CD8-positive, alpha-beta memory T cell (primary cell): ENCODE measurements at regions of chr10 and their contacts with region 1.

Region 1: DNA sequence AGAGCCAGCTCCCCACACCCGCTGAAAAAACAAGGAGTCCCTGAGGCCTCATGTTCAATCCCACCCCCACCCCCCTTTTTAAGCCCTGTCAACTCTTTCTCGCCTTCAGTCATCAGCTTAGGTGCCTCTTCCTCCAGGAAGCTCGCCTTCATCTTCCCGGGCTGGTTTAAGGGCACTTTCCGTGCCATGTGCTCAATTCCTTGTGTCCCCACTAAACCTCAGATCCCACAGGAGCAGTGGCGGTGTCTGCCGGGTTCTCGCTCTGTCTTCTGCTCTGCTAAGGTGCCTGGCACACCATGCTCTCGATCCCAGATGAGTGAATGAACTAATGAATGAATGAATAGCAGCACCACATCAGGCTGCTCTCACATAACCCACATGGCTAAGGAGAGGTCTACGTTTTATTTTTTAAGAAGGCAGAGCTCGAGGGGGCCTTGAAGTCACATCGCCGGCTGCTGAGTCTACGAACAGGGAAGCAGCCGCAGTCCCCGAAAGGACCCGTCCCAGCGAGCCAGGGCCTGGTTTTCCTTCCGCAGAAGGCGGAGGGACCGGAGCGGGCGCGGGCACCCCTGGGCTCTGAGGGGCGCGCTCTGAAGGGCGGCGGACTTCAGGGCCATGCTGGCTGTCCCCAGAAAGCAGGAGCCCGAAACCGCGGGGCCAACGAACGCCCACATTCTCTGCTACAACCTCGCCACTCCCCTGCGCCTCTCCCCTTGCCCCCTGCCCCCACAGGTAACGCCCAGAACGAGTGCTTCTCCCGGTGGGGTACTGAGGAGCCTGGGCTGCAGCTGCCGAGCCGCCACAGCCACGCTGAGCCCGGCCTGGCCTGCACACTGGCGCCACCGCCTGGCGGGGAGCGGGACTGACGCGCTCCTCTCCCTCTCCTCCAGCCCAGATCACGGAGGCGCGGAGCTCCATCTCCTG is 73.4 kb upstream of the KCNMA1 start:
- DNase-seq: peak; percentile 47 to 74 (median 61)
- H3K4me3 ChIP-seq: no peak overlapping the region
- H3K4me3 Mint-ChIP-seq: peak overlapping the region; percentile 14 to 79 (median 62)
- H3K27ac ChIP-seq: no peak overlapping the region
- H3K27ac Mint-ChIP-seq: peak overlapping the region in 1 of 8 donors; percentile 53
- H3K4me1 ChIP-seq: peaks cover 4% of the 10 kb centered on the region
- H3K4me1 Mint-ChIP-seq: peaks cover 8 to 12% (median 11%) of the 10 kb centered on the region in 3 donors
- H3K27me3 ChIP-seq: no peaks in the 10 kb centered on the region
- H3K27me3 Mint-ChIP-seq: peaks cover 12 to 27% of the 10 kb centered on the region in 2 donors

Region 2: GRCh38 chr10:77173615-77174461 is 537.2 kb before region 1 on chr10:
- CTCF ChIA-PET with region 1: interaction called, 14 read pairs
- POLR2A ChIA-PET with region 1: no interaction called
- DNase-seq: peak; percentile 36 to 73 (median 54)
- H3K4me3 ChIP-seq: no peak overlapping the region
- H3K4me3 Mint-ChIP-seq: no peak overlapping the region
- H3K27ac ChIP-seq: no peak overlapping the region
- H3K27ac Mint-ChIP-seq: peak overlapping the region in 1 of 8 donors; percentile 35
- H3K4me1 ChIP-seq: no peaks in the 10 kb centered on the region
- H3K4me1 Mint-ChIP-seq: no peaks in the 10 kb centered on the region
- H3K27me3 ChIP-seq: no peaks in the 10 kb centered on the region
- H3K27me3 Mint-ChIP-seq: peaks cover 5 to 14% of the 10 kb centered on the region in 2 donors

Region 3: DNA sequence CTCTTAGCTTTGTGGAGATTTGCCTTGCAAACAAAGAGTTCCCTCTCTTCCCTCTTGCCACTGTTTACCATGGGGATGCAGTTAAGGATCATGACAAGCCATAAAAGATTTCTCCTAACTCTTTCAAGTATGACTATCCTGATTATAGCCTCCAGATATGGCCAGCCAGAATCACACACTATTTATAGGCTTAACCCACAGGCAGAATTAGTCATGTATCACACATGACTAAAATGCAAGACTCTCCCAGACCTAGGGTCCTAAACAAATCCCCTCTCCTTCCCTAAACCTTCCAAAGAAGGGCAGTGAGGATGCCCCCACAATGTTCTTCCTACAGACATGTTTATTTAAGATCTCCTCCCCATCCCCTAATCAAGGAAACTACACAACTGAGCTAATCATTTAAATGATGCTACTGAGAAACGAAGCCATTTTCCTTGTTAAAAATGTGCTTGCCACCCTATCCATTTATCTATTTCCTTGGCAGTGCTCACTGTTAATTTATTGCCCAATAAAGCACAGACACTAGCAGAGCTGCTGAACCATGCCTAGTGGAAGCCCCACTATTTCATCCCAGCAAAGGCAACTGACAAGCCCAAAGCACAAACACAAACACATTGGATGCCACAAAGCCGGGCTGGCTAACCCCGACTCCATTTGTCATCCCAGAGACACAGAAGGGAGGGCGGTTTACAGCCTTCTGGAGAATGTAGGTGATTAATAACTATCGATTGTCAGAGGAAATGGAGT is 436.8 kb before region 1 on chr10:
- CTCF ChIA-PET with region 1: no interaction called
- POLR2A ChIA-PET with region 1: no interaction called
- DNase-seq: no peak
- H3K4me3 ChIP-seq: no peak overlapping the region
- H3K4me3 Mint-ChIP-seq: peak overlapping the region in 1 of 7 donors; percentile 25
- H3K27ac ChIP-seq: no peak overlapping the region
- H3K27ac Mint-ChIP-seq: peak overlapping the region in 1 of 8 donors; percentile 32
- H3K4me1 ChIP-seq: no peaks in the 10 kb centered on the region
- H3K4me1 Mint-ChIP-seq: peaks cover 20 to 27% (median 23%) of the 10 kb centered on the region in 3 donors
- H3K27me3 ChIP-seq: no peaks in the 10 kb centered on the region
- H3K27me3 Mint-ChIP-seq: peaks cover 0 to 3% of the 10 kb centered on the region in 2 donors

Region 4: GRCh38 chr10:77837240-77837924 is 126.4 kb after region 1 on chr10:
- CTCF ChIA-PET with region 1: interaction called, 20 read pairs
- POLR2A ChIA-PET with region 1: no interaction called
- DNase-seq: peak; percentile 37 to 76 (median 54)
- H3K4me3 ChIP-seq: no peak overlapping the region
- H3K4me3 Mint-ChIP-seq: peak overlapping the region in 6 of 7 donors; percentile 15 to 82 (median 42)
- H3K27ac ChIP-seq: no peak overlapping the region
- H3K27ac Mint-ChIP-seq: peak overlapping the region in 7 of 8 donors; percentile 77 to 99 (median 92)
- H3K4me1 ChIP-seq: peaks cover 21% of the 10 kb centered on the region
- H3K4me1 Mint-ChIP-seq: peaks cover 22 to 30% (median 30%) of the 10 kb centered on the region in 3 donors
- H3K27me3 ChIP-seq: no peaks in the 10 kb centered on the region
- H3K27me3 Mint-ChIP-seq: no peaks in the 10 kb centered on the region

Region 5: DNA sequence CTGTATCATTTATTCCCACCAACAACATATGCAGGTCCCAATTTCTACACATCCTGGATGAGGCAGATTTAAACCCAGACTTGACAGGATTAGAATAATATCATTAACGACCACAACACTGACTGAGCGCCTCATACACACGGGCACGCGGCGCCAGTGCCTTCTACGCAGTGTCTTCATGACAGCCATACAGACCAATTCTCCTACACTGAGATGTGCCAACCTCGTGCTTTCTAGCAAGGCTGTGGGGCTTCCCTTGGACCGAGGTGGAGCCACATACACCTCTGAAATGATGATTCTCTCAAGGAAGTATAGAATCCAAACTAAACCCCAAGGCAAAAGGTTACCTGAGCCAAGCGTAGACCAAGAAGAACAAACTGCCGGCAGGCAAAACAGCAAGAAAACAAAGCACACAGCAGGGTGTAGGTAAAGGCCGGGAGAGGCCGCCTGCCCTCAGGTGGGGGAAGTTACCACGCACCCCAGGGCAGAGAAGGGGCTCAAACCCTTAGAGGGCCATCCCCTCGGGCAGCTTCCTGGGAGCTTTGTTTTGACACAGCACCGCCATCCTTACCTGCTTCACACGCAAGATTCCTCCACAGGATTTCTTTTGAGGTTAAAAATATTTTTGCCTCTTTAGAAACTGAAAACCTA is 139.7 kb after region 1 on chr10:
- CTCF ChIA-PET with region 1: no interaction called
- POLR2A ChIA-PET with region 1: no interaction called
- DNase-seq: no peak
- H3K4me3 ChIP-seq: no peak overlapping the region
- H3K4me3 Mint-ChIP-seq: no peak overlapping the region
- H3K27ac ChIP-seq: no peak overlapping the region
- H3K27ac Mint-ChIP-seq: peak overlapping the region in 2 of 8 donors; percentile 21 to 70
- H3K4me1 ChIP-seq: peaks cover 3% of the 10 kb centered on the region
- H3K4me1 Mint-ChIP-seq: peaks cover 0 to 4% (median 2%) of the 10 kb centered on the region in 3 donors
- H3K27me3 ChIP-seq: no peaks in the 10 kb centered on the region
- H3K27me3 Mint-ChIP-seq: no peaks in the 10 kb centered on the region